ENCODE measurements at regions of chr12 and their contacts with region 1.

Region 1: GRCh38 chr12:96194971-96195844 is 1.0 kb downstream of the ELK3 start:
- DNase-seq: peak; percentile 91 to 99 (median 98)
- H3K4me3 ChIP-seq: peak overlapping the region; percentile 78 to 98 (median 92)
- H3K27ac ChIP-seq: peak overlapping the region; percentile 88 to 92
- H3K4me1 ChIP-seq: peaks cover 14 to 60% (median 43%) of the 10 kb centered on the region in 4 experiments
- H3K27me3 ChIP-seq: no peaks in the 10 kb centered on the region

Region 2: DNA sequence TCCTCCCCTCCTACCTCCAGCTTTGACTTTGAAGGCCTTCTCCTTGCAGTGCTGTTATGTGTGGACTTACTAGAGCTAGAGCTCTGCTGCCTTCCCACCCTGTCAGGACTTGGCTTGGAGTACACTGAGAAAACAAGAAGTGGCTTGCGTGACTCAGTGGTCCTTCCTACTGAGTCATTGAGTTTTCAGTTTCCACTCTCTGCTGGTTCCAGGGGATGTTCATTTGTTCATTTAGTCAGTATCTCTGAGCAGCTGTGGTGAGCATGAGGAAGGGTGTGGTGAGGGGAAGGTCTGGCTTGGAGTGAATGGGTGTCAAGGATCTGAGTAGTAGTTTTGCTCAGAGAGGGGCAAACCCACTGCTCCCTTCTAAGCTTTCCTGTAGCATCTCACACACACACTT is 18.2 kb before region 1 on chr12:
- CTCF ChIA-PET with region 1: no interaction called
- POLR2A ChIA-PET with region 1: no interaction called
- DNase-seq: peak in 2 of 3 donors; percentile 59 to 69
- H3K4me3 ChIP-seq: no peak overlapping the region
- H3K27ac ChIP-seq: no peak overlapping the region
- H3K4me1 ChIP-seq: peaks cover 0 to 4% (median under 1%) of the 10 kb centered on the region in 4 experiments
- H3K27me3 ChIP-seq: no peaks in the 10 kb centered on the region

Region 3: GRCh38 chr12:96208801-96209549 is 13.8 kb after region 1 on chr12:
- CTCF ChIA-PET with region 1: interaction called, 95 read pairs
- POLR2A ChIA-PET with region 1: interaction called, 41 read pairs
- DNase-seq: peak; percentile 18 to 84 (median 81)
- H3K4me3 ChIP-seq: peak overlapping the region in 1 of 7 experiments; percentile 36
- H3K27ac ChIP-seq: peak overlapping the region in 1 of 2 experiments; percentile 19
- H3K4me1 ChIP-seq: peaks cover 40 to 93% (median 75%) of the 10 kb centered on the region in 4 experiments
- H3K27me3 ChIP-seq: no peaks in the 10 kb centered on the region

Region 4: GRCh38 chr12:96258104-96258961 is 63.1 kb after region 1 on chr12:
- CTCF ChIA-PET with region 1: no interaction called
- POLR2A ChIA-PET with region 1: no interaction called
- DNase-seq: no peak
- H3K4me3 ChIP-seq: no peak overlapping the region
- H3K27ac ChIP-seq: no peak overlapping the region
- H3K4me1 ChIP-seq: no peaks in the 10 kb centered on the region
- H3K27me3 ChIP-seq: no peaks in the 10 kb centered on the region